PC-3 (cell line): ENCODE measurements at regions of chr3 and their contacts with region 1.

Region 1: GRCh38 chr3:152026033-152026556 is 152.7 kb downstream of the SUCNR1 start:
- DNase-seq: peak; percentile 96
- ATAC-seq: peak; percentile 49
- H3K4me3 ChIP-seq: peak overlapping the region; percentile 38; the same call in 1 of the 2 replicates
- H3K27ac ChIP-seq: peak overlapping the region; percentile 74
- H3K4me1 ChIP-seq: peaks cover 39% of the 10 kb centered on the region
- H3K27me3 ChIP-seq: no peaks in the 10 kb centered on the region
- CTCF ChIP-seq: peak; percentile 67

Region 2: GRCh38 chr3:151925876-151926275 is 100.2 kb before region 1 on chr3:
- CTCF ChIA-PET with region 1: interaction called, 5 read pairs
- POLR2A ChIA-PET with region 1: no interaction called
- intact Hi-C with region 1: loop called (anchors 1 kb)
- DNase-seq: peak; percentile 89
- ATAC-seq: peak; percentile 89
- H3K4me3 ChIP-seq: peak overlapping the region; percentile 57; the same call in 1 of the 2 replicates
- H3K27ac ChIP-seq: peak overlapping the region; percentile 92
- H3K4me1 ChIP-seq: peaks cover 47% of the 10 kb centered on the region
- H3K27me3 ChIP-seq: no peaks in the 10 kb centered on the region
- CTCF ChIP-seq: no peak

Region 3: DNA sequence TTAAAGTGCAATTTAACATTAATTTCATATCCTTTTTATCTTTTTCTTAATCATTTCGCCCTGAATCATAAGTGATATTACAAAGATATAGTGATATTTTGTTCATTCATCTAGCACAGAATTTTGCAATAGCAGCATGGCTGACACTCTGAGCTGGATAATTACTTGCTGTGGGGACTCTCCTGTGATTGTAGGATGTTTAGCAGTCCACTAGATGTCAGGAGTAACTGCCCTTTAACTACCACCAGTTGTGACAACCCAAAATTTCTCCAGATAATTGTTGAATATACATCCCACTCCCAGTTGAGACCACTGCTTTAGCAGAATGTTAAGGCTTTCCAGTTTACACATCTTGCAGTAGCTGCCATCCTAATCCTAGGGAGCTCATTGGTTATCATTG is 45.8 kb after region 1 on chr3:
- CTCF ChIA-PET with region 1: interaction called, 4 read pairs
- POLR2A ChIA-PET with region 1: no interaction called
- intact Hi-C with region 1: loop called (anchors 1 kb)
- DNase-seq: peak; percentile 64
- ATAC-seq: peak; percentile 65
- H3K4me3 ChIP-seq: no peak overlapping the region
- H3K27ac ChIP-seq: no peak overlapping the region
- H3K4me1 ChIP-seq: peaks cover 5% of the 10 kb centered on the region; the same call in 1 of the 2 replicates
- H3K27me3 ChIP-seq: no peaks in the 10 kb centered on the region
- CTCF ChIP-seq: peak; percentile 83

Region 4: DNA sequence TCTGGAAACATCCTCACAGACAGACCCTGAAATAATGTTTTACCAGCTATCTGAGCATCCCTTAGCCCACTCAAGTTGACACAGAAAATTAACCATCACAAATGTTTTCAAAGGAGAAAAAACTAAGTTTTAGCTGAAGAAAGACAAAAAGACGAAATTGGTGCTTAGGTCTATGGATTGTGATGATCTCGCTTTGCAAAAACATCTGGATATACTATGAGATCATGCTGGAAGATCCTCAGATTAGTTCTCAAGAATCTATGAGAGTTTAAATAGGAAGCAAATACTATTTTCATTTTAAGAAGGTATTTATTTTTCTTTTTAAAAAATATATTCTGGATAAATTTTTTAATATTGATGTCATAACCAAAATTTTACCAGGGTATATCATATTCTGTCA is 200.1 kb after region 1 on chr3:
- CTCF ChIA-PET with region 1: no interaction called
- POLR2A ChIA-PET with region 1: interaction called, 12 read pairs
- intact Hi-C with region 1: no loop called
- DNase-seq: no peak
- ATAC-seq: no peak
- H3K4me3 ChIP-seq: no peak overlapping the region
- H3K27ac ChIP-seq: no peak overlapping the region
- H3K4me1 ChIP-seq: no peaks in the 10 kb centered on the region
- H3K27me3 ChIP-seq: no peaks in the 10 kb centered on the region
- CTCF ChIP-seq: no peak

Region 5: DNA sequence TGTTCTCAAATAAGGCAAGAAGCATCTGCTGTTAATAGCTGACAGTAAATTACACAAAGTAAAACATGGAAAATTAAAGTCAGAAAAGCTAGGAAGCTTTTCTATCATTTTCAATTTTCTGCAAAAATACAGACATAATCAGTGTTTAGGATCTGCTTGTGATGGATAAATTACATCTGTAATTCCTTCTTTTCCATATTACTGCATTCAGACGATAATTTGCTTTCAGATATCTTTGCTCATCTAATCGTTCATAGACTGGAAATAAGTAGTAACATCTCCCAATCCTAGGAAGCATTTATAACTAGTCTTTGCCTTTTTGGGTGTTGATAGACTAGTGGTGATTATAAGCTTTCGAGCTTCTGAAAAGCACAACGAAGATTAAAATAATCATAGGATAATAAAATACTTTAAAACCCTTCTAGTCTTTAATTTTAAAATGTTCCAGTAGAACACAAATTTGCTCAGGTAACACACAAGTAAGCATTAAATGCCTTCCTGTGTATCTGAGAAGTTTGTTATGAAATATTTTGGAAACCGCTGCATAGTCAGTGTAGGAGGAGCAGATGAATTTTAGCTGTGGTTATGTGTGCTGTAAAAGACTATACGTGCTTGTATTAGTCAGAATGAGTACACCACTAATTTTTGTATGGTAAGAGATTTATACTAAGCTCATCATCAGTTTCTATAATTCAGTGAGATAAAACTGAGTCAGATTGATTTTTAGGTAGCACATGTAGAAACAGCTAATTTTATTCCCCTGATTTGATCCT is 283.6 kb after region 1 on chr3:
- CTCF ChIA-PET with region 1: no interaction called
- POLR2A ChIA-PET with region 1: no interaction called
- intact Hi-C with region 1: loop called (anchors 2 kb)
- DNase-seq: peak; percentile 81
- ATAC-seq: peak; percentile 46
- H3K4me3 ChIP-seq: no peak overlapping the region
- H3K27ac ChIP-seq: peak overlapping the region; percentile 97
- H3K4me1 ChIP-seq: peaks cover 59% of the 10 kb centered on the region
- H3K27me3 ChIP-seq: no peaks in the 10 kb centered on the region
- CTCF ChIP-seq: no peak

Region 6: DNA sequence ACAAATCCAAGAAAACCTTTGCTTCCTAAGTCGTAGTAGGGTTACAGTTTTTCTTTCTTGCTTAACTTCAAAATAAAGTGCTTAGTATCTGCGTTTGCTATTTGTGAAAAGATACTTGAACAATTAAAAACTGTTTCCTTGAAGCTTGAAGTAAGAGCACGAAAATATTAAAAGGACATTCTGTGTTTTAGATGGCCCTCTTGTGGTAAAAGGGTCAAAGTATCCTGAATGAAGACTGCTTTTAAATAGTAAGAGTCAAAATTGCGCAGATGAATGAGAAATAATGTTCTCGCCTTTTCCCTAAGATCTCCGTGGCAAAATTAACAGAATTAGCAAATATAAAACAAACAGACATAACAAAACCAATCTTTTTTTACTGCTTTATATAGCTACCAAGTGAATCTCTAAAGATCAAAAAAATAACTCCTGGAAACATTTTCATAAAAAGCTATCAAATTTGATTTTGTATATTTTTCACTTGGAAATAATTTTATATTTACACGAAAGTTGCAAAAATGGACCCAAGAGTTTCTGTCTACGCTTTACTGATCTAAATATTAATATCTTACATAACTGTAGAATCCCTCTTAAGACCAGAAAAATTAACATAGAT is 418.0 kb after region 1 on chr3:
- CTCF ChIA-PET with region 1: no interaction called
- POLR2A ChIA-PET with region 1: interaction called, 6 read pairs
- intact Hi-C with region 1: loop called (anchors 1 kb)
- DNase-seq: peak; percentile 78
- ATAC-seq: peak; percentile 45
- H3K4me3 ChIP-seq: no peak overlapping the region
- H3K27ac ChIP-seq: 0 out of 2 replicates have a peak overlapping the region, but pooled peaks have one; percentile 0
- H3K4me1 ChIP-seq: peaks cover 22% of the 10 kb centered on the region; the same call in 1 of the 2 replicates
- H3K27me3 ChIP-seq: no peaks in the 10 kb centered on the region
- CTCF ChIP-seq: peak; percentile 90